Sigmoid colon (tissue), 7 donors: ENCODE measurements at regions of chr1 and their contacts with region 1.

Region 1: DNA sequence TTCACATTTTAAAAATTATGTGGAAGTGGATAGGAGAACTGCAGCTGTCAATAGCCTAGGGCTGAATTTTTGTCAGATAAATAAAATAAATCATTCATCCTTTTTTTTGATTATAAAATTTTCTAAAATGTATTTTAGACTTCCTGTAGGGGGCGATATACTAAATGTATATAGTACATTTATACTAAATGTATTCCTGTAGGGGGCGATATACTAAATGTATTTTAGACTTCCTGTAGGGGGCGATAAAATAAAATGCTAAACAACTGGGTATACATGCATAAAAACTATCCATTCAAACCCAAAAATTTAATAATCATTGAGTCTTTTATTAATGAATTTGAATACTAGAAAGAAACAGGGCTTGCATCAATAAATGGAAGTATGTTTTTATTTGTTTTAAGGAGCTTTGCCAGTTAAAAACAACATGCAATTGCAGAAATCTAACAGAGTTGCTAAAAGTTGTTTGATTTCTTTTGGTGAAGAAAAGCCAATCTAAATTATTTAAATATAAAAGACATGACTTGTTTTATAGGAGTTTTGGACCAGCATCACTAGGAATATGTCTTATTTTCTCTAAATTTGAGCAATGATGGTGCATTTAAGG is 31.4 kb downstream of the CLCA1 start:
- DNase-seq: no peak
- H3K4me3 ChIP-seq: no peak overlapping the region
- H3K27ac ChIP-seq: peak overlapping the region in 3 of 4 donors; percentile 76 to 87 (median 85)
- H3K4me1 ChIP-seq: peaks cover 0 to 51% (median 43%) of the 10 kb centered on the region in 4 donors
- H3K27me3 ChIP-seq: no peaks in the 10 kb centered on the region
- CTCF ChIP-seq: peak; percentile 5 to 67 (median 52)
- EP300 ChIP-seq: no peak
- POLR2A ChIP-seq: no peak

Region 2: GRCh38 chr1:86395771-86396497 is 104.2 kb before region 1 on chr1 and contains the start of gene ODF2L:
- intact Hi-C with region 1: loop called (anchors 5 kb)
- DNase-seq: peak; percentile 95
- H3K4me3 ChIP-seq: peak within 1 kb of the TSS; percentile 67 to 88 (median 78)
- H3K27ac ChIP-seq: peak within 1 kb of the TSS; percentile 71 to 85 (median 78)
- H3K4me1 ChIP-seq: peaks cover 0 to 25% (median 12%) of the 10 kb centered on the region in 4 donors
- H3K27me3 ChIP-seq: no peaks in the 10 kb centered on the region
- CTCF ChIP-seq: no peak
- EP300 ChIP-seq: no peak
- POLR2A ChIP-seq: peak; percentile 42 to 49
- total RNA-seq, gene ODF2L: 27.8 to 55.1 (median 30.2) TPM

Region 3: DNA sequence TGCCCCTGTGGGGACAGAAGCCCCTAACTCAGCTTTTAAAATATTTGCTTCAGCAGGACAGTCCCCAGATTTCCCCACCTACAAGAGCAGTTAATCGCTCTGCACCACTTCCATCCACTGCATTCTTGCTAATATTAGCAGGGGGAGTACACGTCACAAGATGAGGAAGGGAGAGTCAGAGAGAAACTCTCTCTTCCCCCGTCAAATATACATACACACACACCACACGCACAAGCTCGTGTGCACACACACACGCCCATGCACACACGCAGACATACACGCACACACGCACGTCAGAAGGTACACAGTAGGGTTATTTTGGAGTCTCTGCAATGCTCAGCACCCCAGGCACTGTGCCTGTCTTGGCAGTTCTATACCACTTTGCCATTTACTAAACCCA is 29.2 kb before region 1 on chr1:
- intact Hi-C with region 1: loop called (anchors 2 kb)
- DNase-seq: no peak
- H3K4me3 ChIP-seq: no peak overlapping the region
- H3K27ac ChIP-seq: no peak overlapping the region
- H3K4me1 ChIP-seq: no peaks in the 10 kb centered on the region
- H3K27me3 ChIP-seq: no peaks in the 10 kb centered on the region
- CTCF ChIP-seq: no peak
- EP300 ChIP-seq: no peak
- POLR2A ChIP-seq: no peak